H1 (cell line): ENCODE measurements at regions of chr6 and their contacts with region 1.

Region 1: GRCh38 chr6:122471107-122472021 is at the start of gene SERINC1:
- DNase-seq: peak; percentile 71 to 83
- H3K4me3 ChIP-seq: peak within 1 kb of the TSS; percentile 91 to 99 (median 94)
- H3K27ac ChIP-seq: peak within 1 kb of the TSS; percentile 94
- H3K4me1 ChIP-seq: no peaks in the 10 kb centered on the region
- H3K27me3 ChIP-seq: no peaks in the 10 kb centered on the region
- CTCF ChIP-seq: no peak
- EP300 ChIP-seq: no peak
- POLR2A ChIP-seq: peak; percentile 87 to 90
- RAD21 ChIP-seq: no peak
- total RNA-seq, gene SERINC1: 38.0 and 38.6 TPM in 2 replicates

Region 2: DNA sequence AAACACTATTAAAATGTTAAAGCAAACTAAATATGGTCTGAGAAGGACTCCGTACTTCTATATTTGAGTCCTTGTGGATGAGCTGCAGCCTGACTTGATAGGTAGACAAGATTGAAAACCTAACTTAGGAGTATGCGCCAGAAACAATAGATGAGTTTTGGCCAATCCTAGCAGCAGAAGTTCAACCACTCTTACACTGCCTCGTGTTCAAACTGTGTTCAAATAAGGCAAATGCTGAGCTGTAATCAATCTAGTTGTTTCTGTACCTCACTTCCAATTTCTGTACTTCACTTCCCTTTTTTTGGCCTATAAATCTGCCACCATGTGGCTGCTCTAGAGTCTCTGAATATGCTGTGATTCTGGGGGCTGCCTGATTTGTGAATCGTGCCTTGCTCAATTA is 13.4 kb after region 1 on chr6:
- CTCF ChIA-PET with region 1: interaction called, 4 read pairs
- POLR2A ChIA-PET with region 1: interaction called, 19 read pairs
- DNase-seq: no peak
- H3K4me3 ChIP-seq: peak overlapping the region in 2 of 4 experiments; percentile 27 to 55; a peak in 2 of 8 replicates
- H3K27ac ChIP-seq: no peak overlapping the region
- H3K4me1 ChIP-seq: no peaks in the 10 kb centered on the region; a peak in 1 of 7 replicates
- H3K27me3 ChIP-seq: no peaks in the 10 kb centered on the region
- CTCF ChIP-seq: no peak
- EP300 ChIP-seq: no peak
- POLR2A ChIP-seq: no peak
- RAD21 ChIP-seq: no peak